Posterior vena cava (tissue), 2 donors: ENCODE measurements at regions of chr10 and their contacts with region 1.

Region 1: GRCh38 chr10:98467506-98468346 is 21.0 kb upstream of the HPS1 start:
- DNase-seq: peak; percentile 84

Region 2: DNA sequence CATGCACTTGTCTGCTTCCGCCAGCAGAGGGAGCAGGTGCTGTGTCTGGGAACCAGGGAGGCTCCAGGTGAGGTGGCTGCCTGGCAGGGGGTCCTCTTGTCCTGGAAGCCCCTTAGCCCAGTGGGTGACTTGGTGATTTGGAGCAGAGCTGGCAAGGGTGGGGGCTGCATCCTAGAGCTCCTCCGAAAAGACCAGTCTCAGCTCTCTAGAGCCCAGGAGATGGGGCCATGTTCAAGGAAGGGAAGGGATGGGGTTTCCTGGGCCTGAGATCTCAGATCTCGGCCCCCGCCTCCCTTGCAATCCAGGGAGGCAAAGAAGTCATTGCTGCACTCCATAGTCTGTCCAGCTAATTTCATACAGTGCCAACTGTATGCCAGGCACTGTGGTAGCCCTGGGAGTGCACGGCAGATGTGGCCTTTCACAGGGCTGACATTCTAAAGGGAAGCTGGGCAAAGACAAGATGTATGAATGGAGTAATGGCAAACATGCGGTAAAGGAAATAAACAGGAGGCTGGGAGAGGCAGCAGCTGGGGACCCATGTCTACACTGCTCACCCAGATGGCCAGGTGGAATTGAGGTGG is 675.5 kb before region 1 on chr10:
- intact Hi-C with region 1: no loop called
- DNase-seq: no peak

Region 3: DNA sequence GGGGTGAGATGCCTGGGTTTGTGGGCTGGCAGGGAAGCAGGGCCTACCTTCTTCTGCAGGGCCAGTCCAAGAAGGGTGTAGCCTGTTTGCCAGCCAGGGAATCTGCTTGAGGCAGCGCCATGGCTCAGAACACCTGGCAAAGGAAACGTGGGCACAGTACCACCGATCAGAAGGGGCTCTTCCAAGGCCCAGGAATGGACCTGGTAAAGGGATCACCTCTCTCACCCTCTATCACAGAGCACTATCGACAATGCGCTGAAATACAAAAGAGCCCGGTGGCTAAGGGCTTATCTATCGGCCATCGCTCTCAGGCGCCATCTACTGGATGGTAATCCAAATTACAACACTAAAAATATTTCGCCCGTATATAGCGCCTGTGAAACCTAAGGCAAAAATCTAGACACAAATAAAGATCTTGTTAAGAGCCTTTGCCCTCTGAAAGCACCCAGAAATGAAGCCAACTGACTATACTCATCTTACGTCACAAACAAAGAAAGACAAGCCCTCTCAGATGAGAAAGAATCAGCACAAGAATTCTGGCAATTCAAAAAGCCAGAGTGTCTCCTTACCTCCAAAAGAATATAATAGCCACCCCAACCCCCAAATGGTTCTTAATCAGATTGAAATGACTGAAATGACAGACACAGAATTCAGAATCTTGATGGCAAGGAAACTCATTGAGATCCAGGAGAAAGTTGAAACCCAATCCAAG is 196.8 kb after region 1 on chr10:
- intact Hi-C with region 1: loop called in 1 of 2 experiments (anchors 10 kb)
- DNase-seq: no peak

Region 4: DNA sequence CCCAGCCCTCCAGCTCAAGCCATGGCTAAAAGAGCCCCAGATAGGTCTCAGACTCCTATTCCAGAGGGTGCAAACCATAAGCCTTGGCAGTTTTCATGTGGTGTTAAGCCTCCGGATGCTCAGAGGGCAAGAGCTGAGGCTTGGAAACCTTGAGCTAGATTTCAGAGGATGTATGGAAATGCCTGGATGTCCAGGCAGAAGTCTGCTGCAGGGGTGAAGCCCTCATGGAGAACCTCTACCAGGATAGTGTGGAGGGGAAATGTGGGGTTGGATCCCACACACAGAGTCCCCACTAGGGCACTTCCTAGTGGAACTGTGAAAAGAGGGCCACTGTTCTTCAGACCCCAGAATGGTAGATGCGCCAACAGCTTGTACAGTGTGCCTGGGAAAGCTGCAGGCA is 781.1 kb after region 1 on chr10:
- intact Hi-C with region 1: loop called (anchors 1 to 5 kb)
- DNase-seq: no peak